H1 (cell line): ENCODE measurements at regions of chr11 and their contacts with region 1.

Region 1: GRCh38 chr11:104333977-104334376 is 170.0 kb upstream of the PDGFD start:
- DNase-seq: peak in 1 of 2 experiments; percentile 53
- H3K4me3 ChIP-seq: no peak overlapping the region
- H3K27ac ChIP-seq: no peak overlapping the region
- H3K4me1 ChIP-seq: no peaks in the 10 kb centered on the region
- H3K27me3 ChIP-seq: peaks cover 0 to 1% (median 0%) of the 10 kb centered on the region in 4 experiments; a peak in 1 of 7 replicates
- CTCF ChIP-seq: peak; percentile 42 to 54 (median 46)
- EP300 ChIP-seq: no peak
- POLR2A ChIP-seq: no peak
- RAD21 ChIP-seq: peak; percentile 25 to 40; a peak in 2 of 4 replicates

Region 2: GRCh38 chr11:103936059-103936458 is 397.9 kb before region 1 on chr11:
- CTCF ChIA-PET with region 1: no interaction called
- POLR2A ChIA-PET with region 1: no interaction called
- DNase-seq: no peak
- H3K4me3 ChIP-seq: no peak overlapping the region
- H3K27ac ChIP-seq: no peak overlapping the region
- H3K4me1 ChIP-seq: 0 out of 7 replicates have a peak, but pooled peaks cover 0 to 2% (median 0%) of the 10 kb centered on the region in 4 experiments
- H3K27me3 ChIP-seq: no peaks in the 10 kb centered on the region
- CTCF ChIP-seq: no peak
- EP300 ChIP-seq: no peak
- POLR2A ChIP-seq: no peak
- RAD21 ChIP-seq: no peak

Region 3: GRCh38 chr11:104183593-104183992 is 150.4 kb before region 1 on chr11:
- CTCF ChIA-PET with region 1: no interaction called
- POLR2A ChIA-PET with region 1: no interaction called
- DNase-seq: no peak
- H3K4me3 ChIP-seq: no peak overlapping the region
- H3K27ac ChIP-seq: no peak overlapping the region
- H3K4me1 ChIP-seq: no peaks in the 10 kb centered on the region
- H3K27me3 ChIP-seq: no peaks in the 10 kb centered on the region
- CTCF ChIP-seq: no peak
- EP300 ChIP-seq: no peak
- POLR2A ChIP-seq: no peak
- RAD21 ChIP-seq: no peak

Region 4: GRCh38 chr11:104206936-104207335 is 127.0 kb before region 1 on chr11:
- CTCF ChIA-PET with region 1: no interaction called
- POLR2A ChIA-PET with region 1: no interaction called
- DNase-seq: no peak
- H3K4me3 ChIP-seq: no peak overlapping the region
- H3K27ac ChIP-seq: no peak overlapping the region
- H3K4me1 ChIP-seq: no peaks in the 10 kb centered on the region
- H3K27me3 ChIP-seq: no peaks in the 10 kb centered on the region
- CTCF ChIP-seq: no peak
- EP300 ChIP-seq: no peak
- POLR2A ChIP-seq: no peak
- RAD21 ChIP-seq: no peak

Region 5: GRCh38 chr11:104254347-104254746 is 79.6 kb before region 1 on chr11:
- CTCF ChIA-PET with region 1: interaction called, 11 read pairs
- POLR2A ChIA-PET with region 1: no interaction called
- DNase-seq: peak; percentile 65 to 87
- H3K4me3 ChIP-seq: no peak overlapping the region
- H3K27ac ChIP-seq: no peak overlapping the region
- H3K4me1 ChIP-seq: no peaks in the 10 kb centered on the region
- H3K27me3 ChIP-seq: no peaks in the 10 kb centered on the region
- CTCF ChIP-seq: peak; percentile 81 to 95 (median 87)
- EP300 ChIP-seq: no peak
- POLR2A ChIP-seq: no peak
- RAD21 ChIP-seq: peak; percentile 95 to 97

Region 6: DNA sequence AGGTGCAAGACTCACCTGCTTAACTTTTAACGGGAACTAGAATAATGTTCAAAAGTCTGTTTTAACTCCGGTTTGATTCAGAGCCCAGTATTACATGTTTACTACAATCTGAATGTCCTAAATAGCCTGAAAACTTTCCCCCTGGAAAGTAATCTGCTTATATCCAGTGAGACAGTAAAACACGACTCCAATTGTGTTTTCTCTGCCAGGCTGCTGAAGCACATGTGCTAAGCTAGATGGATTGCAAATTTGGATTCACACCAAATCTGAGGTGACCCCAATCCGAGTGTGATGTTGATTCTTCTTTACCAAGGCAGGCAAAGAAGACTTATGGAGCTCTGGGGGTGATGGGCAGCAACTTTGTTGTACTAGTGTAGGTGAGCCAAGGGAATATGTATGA is 11.3 kb before region 1 on chr11:
- CTCF ChIA-PET with region 1: interaction called, 16 read pairs
- POLR2A ChIA-PET with region 1: interaction called, 3 read pairs
- DNase-seq: no peak
- H3K4me3 ChIP-seq: no peak overlapping the region
- H3K27ac ChIP-seq: no peak overlapping the region
- H3K4me1 ChIP-seq: no peaks in the 10 kb centered on the region
- H3K27me3 ChIP-seq: peaks cover 0 to 1% (median 0%) of the 10 kb centered on the region in 4 experiments; a peak in 1 of 7 replicates
- CTCF ChIP-seq: no peak
- EP300 ChIP-seq: no peak
- POLR2A ChIP-seq: no peak
- RAD21 ChIP-seq: no peak

Region 7: DNA sequence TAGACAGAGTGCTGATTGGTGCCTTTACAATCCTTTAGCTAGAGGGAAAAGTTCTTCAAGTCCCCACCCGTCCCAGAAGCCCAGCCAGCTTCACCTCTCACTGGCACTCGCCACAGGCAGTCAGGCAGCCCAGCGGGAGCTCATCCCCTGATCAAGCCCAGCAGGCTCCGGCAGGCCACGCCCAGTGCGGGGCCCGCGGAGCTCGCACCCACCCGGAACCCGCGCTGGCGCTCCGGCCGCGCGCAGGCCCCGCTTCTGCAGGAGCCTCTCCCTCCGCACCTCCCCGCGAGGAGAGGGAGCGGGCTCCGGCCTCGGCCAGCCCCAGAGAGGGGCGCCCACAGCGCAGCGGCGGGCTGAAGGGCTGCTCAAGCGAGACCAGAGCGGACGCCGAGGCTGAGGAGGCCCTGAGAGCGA is 32.4 kb after region 1 on chr11:
- CTCF ChIA-PET with region 1: interaction called, 13 read pairs
- POLR2A ChIA-PET with region 1: no interaction called
- DNase-seq: no peak
- H3K4me3 ChIP-seq: no peak overlapping the region
- H3K27ac ChIP-seq: no peak overlapping the region
- H3K4me1 ChIP-seq: no peaks in the 10 kb centered on the region
- H3K27me3 ChIP-seq: no peaks in the 10 kb centered on the region
- CTCF ChIP-seq: no peak
- EP300 ChIP-seq: no peak
- POLR2A ChIP-seq: no peak
- RAD21 ChIP-seq: no peak

Region 8: GRCh38 chr11:104422315-104422944 is 88.5 kb after region 1 on chr11:
- CTCF ChIA-PET with region 1: no interaction called
- POLR2A ChIA-PET with region 1: no interaction called
- DNase-seq: no peak
- H3K4me3 ChIP-seq: no peak overlapping the region
- H3K27ac ChIP-seq: no peak overlapping the region
- H3K4me1 ChIP-seq: no peaks in the 10 kb centered on the region
- H3K27me3 ChIP-seq: no peaks in the 10 kb centered on the region
- CTCF ChIP-seq: no peak
- EP300 ChIP-seq: no peak
- POLR2A ChIP-seq: no peak
- RAD21 ChIP-seq: no peak